ENCODE measurements at regions of chr11 and their contacts with region 1.

Region 1: GRCh38 chr11:75814686-75815344 is at the start of gene UVRAG:
- DNase-seq: peak; percentile 97 to 99 (median 98)
- ATAC-seq: peak; percentile 88
- H3K4me3 ChIP-seq: peak within 1 kb of the TSS; percentile 65 to 93
- H3K4me3 Mint-ChIP-seq: no peak within 1 kb of the TSS
- H3K27ac ChIP-seq: peak within 1 kb of the TSS; percentile 77 to 88
- H3K27ac Mint-ChIP-seq: peak within 1 kb of the TSS; percentile 97
- H3K4me1 ChIP-seq: peaks cover 23% of the 10 kb centered on the region
- H3K4me1 Mint-ChIP-seq: peaks cover 21% of the 10 kb centered on the region
- H3K27me3 ChIP-seq: no peaks in the 10 kb centered on the region
- H3K27me3 Mint-ChIP-seq: no peaks in the 10 kb centered on the region
- CTCF ChIP-seq: no peak
- total RNA-seq, gene UVRAG: 14.3 to 15.1 TPM

Region 2: GRCh38 chr11:75399344-75400145 is 415.3 kb before region 1 on chr11 and contains the start of gene RPS3:
- CTCF ChIA-PET with region 1: no interaction called
- POLR2A ChIA-PET with region 1: no interaction called
- intact Hi-C with region 1: loop called in 1 of 2 experiments (anchors 10 kb)
- DNase-seq: peak; percentile 72 to 93 (median 88)
- ATAC-seq: peak; percentile 88
- H3K4me3 ChIP-seq: peak within 1 kb of the TSS; percentile 69 to 76
- H3K4me3 Mint-ChIP-seq: peak within 1 kb of the TSS; percentile 95
- H3K27ac ChIP-seq: peak within 1 kb of the TSS; percentile 88 to 89
- H3K27ac Mint-ChIP-seq: peak within 1 kb of the TSS; percentile 95
- H3K4me1 ChIP-seq: peaks cover 28% of the 10 kb centered on the region
- H3K4me1 Mint-ChIP-seq: peaks cover 48% of the 10 kb centered on the region
- H3K27me3 ChIP-seq: no peaks in the 10 kb centered on the region
- H3K27me3 Mint-ChIP-seq: no peaks in the 10 kb centered on the region
- CTCF ChIP-seq: no peak
- total RNA-seq, gene RPS3: 4,683 to 5,039 TPM

Region 3: GRCh38 chr11:75706260-75706729 is 108.5 kb before region 1 on chr11:
- CTCF ChIA-PET with region 1: no interaction called
- POLR2A ChIA-PET with region 1: no interaction called
- intact Hi-C with region 1: no loop called
- DNase-seq: peak; percentile 32 to 77 (median 66)
- ATAC-seq: peak; percentile 78
- H3K4me3 ChIP-seq: no peak overlapping the region
- H3K4me3 Mint-ChIP-seq: no peak overlapping the region
- H3K27ac ChIP-seq: no peak overlapping the region
- H3K27ac Mint-ChIP-seq: no peak overlapping the region
- H3K4me1 ChIP-seq: peaks cover 6% of the 10 kb centered on the region
- H3K4me1 Mint-ChIP-seq: peaks cover 11% of the 10 kb centered on the region
- H3K27me3 ChIP-seq: no peaks in the 10 kb centered on the region
- H3K27me3 Mint-ChIP-seq: peaks cover 6% of the 10 kb centered on the region
- CTCF ChIP-seq: peak; percentile 90

Region 4: DNA sequence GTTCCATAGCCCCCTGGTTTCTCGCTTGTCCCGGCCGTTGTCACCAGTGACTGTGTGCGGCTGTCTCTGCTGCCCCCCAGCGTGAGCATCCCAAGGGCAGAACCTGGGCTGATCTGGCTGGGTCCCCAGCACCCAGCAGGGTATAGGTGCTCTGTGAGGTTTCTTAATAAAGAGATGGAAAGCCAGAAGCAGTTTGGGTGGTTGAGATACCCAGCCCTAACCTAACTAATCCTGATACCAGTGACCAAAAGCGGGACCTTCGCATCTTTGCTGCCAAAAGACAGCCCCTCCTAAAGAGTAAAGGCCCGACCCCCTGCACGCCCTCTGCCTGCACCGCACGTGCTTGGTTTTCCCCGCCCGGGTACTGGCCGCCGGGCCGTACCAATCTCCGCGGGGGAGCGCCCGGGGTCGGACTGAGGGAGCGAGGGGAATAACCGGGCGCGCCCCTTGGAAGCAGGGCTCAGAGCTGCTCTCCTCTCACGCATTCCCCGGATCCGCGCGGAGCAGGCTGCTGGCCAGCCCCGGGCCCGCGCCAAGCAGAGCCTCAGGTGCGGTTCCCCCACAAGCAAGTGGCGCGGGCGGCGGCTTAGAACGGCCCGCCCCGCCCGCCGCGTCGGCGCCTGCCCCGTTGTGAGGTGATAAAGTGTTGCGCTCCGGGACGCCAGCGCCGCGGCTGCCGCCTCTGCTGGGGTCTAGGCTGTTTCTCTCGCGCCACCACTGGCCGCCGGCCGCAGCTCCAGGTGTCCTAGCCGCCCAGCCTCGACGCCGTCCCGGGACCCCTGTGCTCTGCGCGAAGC is 46.5 kb before region 1 on chr11 and contains the start of gene DGAT2:
- CTCF ChIA-PET with region 1: no interaction called
- POLR2A ChIA-PET with region 1: no interaction called
- intact Hi-C with region 1: loop called in 1 of 2 experiments (anchors 1 kb)
- DNase-seq: peak; percentile 50 to 83 (median 67)
- ATAC-seq: peak; percentile 91
- H3K4me3 ChIP-seq: peak within 1 kb of the TSS; percentile 54 to 71
- H3K4me3 Mint-ChIP-seq: peak within 1 kb of the TSS; percentile 80
- H3K27ac ChIP-seq: no peak within 1 kb of the TSS
- H3K27ac Mint-ChIP-seq: peak within 1 kb of the TSS; percentile 49
- H3K4me1 ChIP-seq: peaks cover 18% of the 10 kb centered on the region
- H3K4me1 Mint-ChIP-seq: peaks cover 17% of the 10 kb centered on the region
- H3K27me3 ChIP-seq: peaks cover 4 to 8% of the 10 kb centered on the region in 2 experiments
- H3K27me3 Mint-ChIP-seq: peaks cover 16% of the 10 kb centered on the region
- CTCF ChIP-seq: no peak
- total RNA-seq, gene DGAT2: not detected

Region 5: DNA sequence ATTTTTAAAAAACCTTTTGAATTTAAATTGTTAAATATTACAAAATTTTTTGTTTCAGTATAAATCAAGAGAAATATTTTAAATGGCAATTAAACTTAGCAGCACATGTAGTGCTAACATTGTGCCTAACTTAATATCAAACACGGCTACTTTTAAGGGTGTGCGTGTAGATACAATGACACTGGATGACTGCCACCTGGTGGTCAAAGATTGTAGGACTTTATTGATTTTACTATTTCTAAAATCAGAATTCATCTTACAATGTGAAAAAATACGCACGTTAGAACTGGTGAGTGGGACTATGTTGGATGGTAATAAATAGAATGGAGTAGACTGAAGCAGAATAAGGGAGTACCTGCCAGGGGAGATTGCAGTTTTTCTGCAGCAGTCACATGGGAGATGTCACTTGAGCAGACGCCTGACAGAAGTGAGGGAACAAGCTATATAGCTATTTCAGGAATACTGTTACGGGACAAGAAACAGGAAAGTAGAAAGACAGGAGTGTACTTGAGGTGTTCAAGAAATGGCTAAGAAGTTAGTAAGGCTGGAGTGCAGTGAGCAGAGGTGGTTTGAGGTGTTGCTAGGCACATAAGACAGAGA is 53.1 kb after region 1 on chr11:
- CTCF ChIA-PET with region 1: interaction called, 13 read pairs
- POLR2A ChIA-PET with region 1: interaction called, 3 read pairs
- intact Hi-C with region 1: loop called in 1 of 2 experiments (anchors 5 kb)
- DNase-seq: peak in 7 of 9 experiments; percentile 24 to 74 (median 53)
- ATAC-seq: peak; percentile 61
- H3K4me3 ChIP-seq: no peak overlapping the region
- H3K4me3 Mint-ChIP-seq: no peak overlapping the region
- H3K27ac ChIP-seq: no peak overlapping the region
- H3K27ac Mint-ChIP-seq: no peak overlapping the region
- H3K4me1 ChIP-seq: no peaks in the 10 kb centered on the region
- H3K4me1 Mint-ChIP-seq: peaks cover 2% of the 10 kb centered on the region
- H3K27me3 ChIP-seq: no peaks in the 10 kb centered on the region
- H3K27me3 Mint-ChIP-seq: no peaks in the 10 kb centered on the region
- CTCF ChIP-seq: peak; percentile 90

Region 6: GRCh38 chr11:76380967-76381719 is 566.3 kb after region 1 on chr11 and contains the starts of genes GVQW3 and THAP12:
- CTCF ChIA-PET with region 1: no interaction called
- POLR2A ChIA-PET with region 1: no interaction called
- intact Hi-C with region 1: loop called (anchors 1 to 2 kb)
- DNase-seq: peak; percentile 93 to 99 (median 97)
- ATAC-seq: peak; percentile 89
- H3K4me3 ChIP-seq: peak within 1 kb of the TSS; percentile 62 to 64
- H3K4me3 Mint-ChIP-seq: peak within 1 kb of the TSS; percentile 94
- H3K27ac ChIP-seq: peak within 1 kb of the TSS; percentile 46 to 56
- H3K27ac Mint-ChIP-seq: peak within 1 kb of the TSS; percentile 90
- H3K4me1 ChIP-seq: peaks cover 34% of the 10 kb centered on the region
- H3K4me1 Mint-ChIP-seq: peaks cover 67% of the 10 kb centered on the region
- H3K27me3 ChIP-seq: no peaks in the 10 kb centered on the region
- H3K27me3 Mint-ChIP-seq: no peaks in the 10 kb centered on the region
- CTCF ChIP-seq: no peak
- total RNA-seq, gene GVQW3: 1.4 to 1.6 TPM
- total RNA-seq, gene THAP12: 44.7 to 47.2 TPM

Region 7: DNA sequence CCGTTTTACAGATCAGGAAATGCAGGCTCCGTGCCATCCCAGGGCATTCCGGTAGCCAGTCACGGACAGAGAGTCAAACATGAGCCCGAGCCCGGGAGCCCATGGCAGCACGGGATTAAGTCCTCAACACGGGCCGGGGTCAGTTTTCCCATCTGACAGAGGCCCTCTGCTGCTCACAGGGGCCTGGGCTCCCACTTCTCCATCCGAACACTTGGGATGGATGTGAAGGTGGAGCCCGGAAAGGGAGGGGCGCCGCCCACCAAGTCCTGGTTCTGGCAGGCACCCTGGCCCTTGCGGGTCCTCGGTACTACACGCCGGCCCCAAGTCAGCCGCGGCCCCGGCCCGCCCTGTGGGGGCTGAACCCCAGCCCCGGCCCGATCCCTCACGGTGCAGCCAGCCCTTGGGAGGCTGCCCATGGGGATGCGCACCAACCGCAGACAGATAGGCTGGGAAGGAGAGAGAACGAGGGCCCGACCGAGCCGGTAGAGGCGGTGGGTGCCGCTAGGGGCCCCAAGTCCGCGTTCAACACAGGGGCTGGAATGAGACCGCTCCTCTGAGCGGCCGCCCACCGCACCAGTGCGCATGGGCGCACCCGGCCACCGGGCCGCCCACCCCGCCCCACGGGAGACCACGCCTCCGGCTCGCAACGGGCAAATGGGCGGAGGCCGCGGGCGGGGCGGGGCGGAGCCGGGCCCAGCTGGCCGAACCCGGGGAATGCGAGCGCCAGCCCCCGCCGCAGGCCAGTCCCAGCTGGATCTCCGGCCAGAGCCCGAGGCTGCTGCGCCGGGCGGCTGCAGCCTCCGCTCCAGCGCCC is 1251.6 kb after region 1 on chr11 and contains the start of gene CAPN5:
- CTCF ChIA-PET with region 1: no interaction called
- POLR2A ChIA-PET with region 1: no interaction called
- intact Hi-C with region 1: loop called in 1 of 2 experiments (anchors 10 kb)
- DNase-seq: peak; percentile 68 to 93 (median 88)
- ATAC-seq: peak; percentile 91
- H3K4me3 ChIP-seq: peak within 1 kb of the TSS; percentile 56 to 87
- H3K4me3 Mint-ChIP-seq: peak within 1 kb of the TSS; percentile 83
- H3K27ac ChIP-seq: peak within 1 kb of the TSS; percentile 32 to 48
- H3K27ac Mint-ChIP-seq: peak within 1 kb of the TSS; percentile 69
- H3K4me1 ChIP-seq: peaks cover 22% of the 10 kb centered on the region
- H3K4me1 Mint-ChIP-seq: peaks cover 25% of the 10 kb centered on the region
- H3K27me3 ChIP-seq: no peaks in the 10 kb centered on the region
- H3K27me3 Mint-ChIP-seq: no peaks in the 10 kb centered on the region
- CTCF ChIP-seq: peak; percentile 40
- total RNA-seq, gene CAPN5: 6.5 to 7.4 TPM

Region 8: DNA sequence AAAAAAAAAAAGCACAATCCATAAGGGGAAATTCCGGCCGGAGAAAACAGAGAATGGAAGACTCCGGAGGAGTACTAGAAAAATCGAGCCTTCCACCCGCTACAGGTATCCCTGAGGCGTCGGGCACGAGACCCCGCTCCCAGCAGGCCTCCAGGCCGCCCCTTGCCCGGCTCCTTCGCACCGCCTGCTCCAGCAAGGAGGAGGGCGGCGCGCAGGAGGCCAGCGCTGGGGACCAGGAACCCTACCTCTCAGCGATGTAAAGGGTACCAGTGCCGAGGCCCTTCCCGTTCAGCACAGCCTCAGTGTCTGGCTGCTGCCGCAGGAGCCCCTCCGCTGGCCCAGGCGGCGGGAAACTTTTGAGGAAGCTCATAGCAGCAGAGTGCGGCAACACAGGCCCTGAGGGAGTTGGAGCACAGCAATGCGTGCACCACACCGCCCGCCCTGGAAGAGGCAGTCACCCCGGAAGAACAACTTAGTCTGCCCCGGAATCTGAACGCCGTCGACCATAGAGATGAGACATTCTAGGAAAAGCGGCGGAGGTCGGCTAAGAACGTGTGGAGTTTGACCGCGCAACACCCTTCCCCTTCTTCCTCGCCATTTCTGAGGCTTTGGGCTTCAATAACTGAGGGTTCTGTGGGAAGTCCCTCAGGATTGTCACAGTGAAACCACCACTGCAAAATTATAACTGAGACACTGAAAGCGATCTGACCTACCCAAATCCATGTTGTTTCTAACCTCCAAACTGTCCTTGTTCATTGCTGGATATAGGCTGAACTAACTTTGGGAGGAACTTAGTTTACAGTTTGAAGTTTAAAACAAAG is 1822.7 kb after region 1 on chr11 and contains the start of gene CLNS1A:
- CTCF ChIA-PET with region 1: no interaction called
- POLR2A ChIA-PET with region 1: no interaction called
- intact Hi-C with region 1: loop called in 1 of 2 experiments (anchors 10 kb)
- DNase-seq: peak; percentile 51 to 88 (median 81)
- ATAC-seq: peak; percentile 99
- H3K4me3 ChIP-seq: peak within 1 kb of the TSS; percentile 88 to 91
- H3K4me3 Mint-ChIP-seq: peak within 1 kb of the TSS; percentile 95
- H3K27ac ChIP-seq: peak within 1 kb of the TSS; percentile 62 to 80
- H3K27ac Mint-ChIP-seq: peak within 1 kb of the TSS; percentile 97
- H3K4me1 ChIP-seq: peaks cover 26% of the 10 kb centered on the region
- H3K4me1 Mint-ChIP-seq: peaks cover 43% of the 10 kb centered on the region
- H3K27me3 ChIP-seq: no peaks in the 10 kb centered on the region
- H3K27me3 Mint-ChIP-seq: no peaks in the 10 kb centered on the region
- CTCF ChIP-seq: no peak
- total RNA-seq, gene CLNS1A: 84.6 to 87.5 TPM

Measured in CD8-positive, alpha-beta T cell (primary cell).